ENCODE measurements at regions of chr5 and their contacts with region 1.

Region 1: GRCh38 chr5:141564216-141564692 is 54.5 kb downstream of the DIAPH1 start:
- DNase-seq: peak; percentile 75
- ATAC-seq: peak; percentile 90
- H3K4me3 Mint-ChIP-seq: peak overlapping the region; percentile 12
- H3K27ac Mint-ChIP-seq: peak overlapping the region; percentile 74
- H3K4me1 Mint-ChIP-seq: peaks cover 41% of the 10 kb centered on the region
- H3K27me3 Mint-ChIP-seq: no peaks in the 10 kb centered on the region

Region 2: GRCh38 chr5:141199359-141200235 is 364.7 kb before region 1 on chr5 and contains the start of gene PCDHB11:
- CTCF ChIA-PET with region 1: no interaction called
- POLR2A ChIA-PET with region 1: no interaction called
- intact Hi-C with region 1: loop called in 1 of 2 experiments (anchors 5 kb)
- DNase-seq: peak; percentile 20
- ATAC-seq: no peak
- H3K4me3 Mint-ChIP-seq: no peak within 1 kb of the TSS
- H3K27ac Mint-ChIP-seq: no peak within 1 kb of the TSS
- H3K4me1 Mint-ChIP-seq: no peaks in the 10 kb centered on the region
- H3K27me3 Mint-ChIP-seq: peaks cover 39% of the 10 kb centered on the region
- total RNA-seq, gene PCDHB11: not detected

Region 3: GRCh38 chr5:141326088-141326854 is 238.0 kb before region 1 on chr5:
- CTCF ChIA-PET with region 1: interaction called, 25 read pairs
- POLR2A ChIA-PET with region 1: no interaction called
- intact Hi-C with region 1: loop called (anchors 2 to 5 kb)
- DNase-seq: peak; percentile 84
- ATAC-seq: peak; percentile 94
- H3K4me3 Mint-ChIP-seq: peak overlapping the region; percentile 72
- H3K27ac Mint-ChIP-seq: peak overlapping the region; percentile 72
- H3K4me1 Mint-ChIP-seq: peaks cover 4% of the 10 kb centered on the region
- H3K27me3 Mint-ChIP-seq: peaks cover 29% of the 10 kb centered on the region

Region 4: GRCh38 chr5:141420855-141421496 is 143.3 kb before region 1 on chr5 and contains the start of gene PCDHGA11:
- CTCF ChIA-PET with region 1: interaction called, 15 read pairs
- POLR2A ChIA-PET with region 1: no interaction called
- intact Hi-C with region 1: loop called in 1 of 2 experiments (anchors 1 kb)
- DNase-seq: peak; percentile 75
- ATAC-seq: peak; percentile 57
- H3K4me3 Mint-ChIP-seq: peak within 1 kb of the TSS; percentile 69
- H3K27ac Mint-ChIP-seq: no peak within 1 kb of the TSS
- H3K4me1 Mint-ChIP-seq: peaks cover 2% of the 10 kb centered on the region
- H3K27me3 Mint-ChIP-seq: peaks cover 70% of the 10 kb centered on the region
- total RNA-seq, gene PCDHGA11: 0.07 TPM in 1 of 2 experiments, not detected in the other

Region 5: DNA sequence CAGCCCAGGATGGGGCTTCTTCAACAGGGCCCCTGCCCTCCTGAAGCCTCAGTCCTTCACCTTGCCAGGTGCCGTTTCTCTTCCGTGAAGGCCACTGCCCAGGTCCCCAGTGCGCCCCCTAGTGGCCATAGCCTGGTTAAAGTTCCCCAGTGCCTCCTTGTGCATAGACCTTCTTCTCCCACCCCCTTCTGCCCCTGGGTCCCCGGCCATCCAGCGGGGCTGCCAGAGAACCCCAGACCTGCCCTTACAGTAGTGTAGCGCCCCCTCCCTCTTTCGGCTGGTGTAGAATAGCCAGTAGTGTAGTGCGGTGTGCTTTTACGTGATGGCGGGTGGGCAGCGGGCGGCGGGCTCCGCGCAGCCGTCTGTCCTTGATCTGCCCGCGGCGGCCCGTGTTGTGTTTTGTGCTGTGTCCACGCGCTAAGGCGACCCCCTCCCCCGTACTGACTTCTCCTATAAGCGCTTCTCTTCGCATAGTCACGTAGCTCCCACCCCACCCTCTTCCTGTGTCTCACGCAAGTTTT is 51.8 kb before region 1 on chr5:
- CTCF ChIA-PET with region 1: interaction called, 23 read pairs
- POLR2A ChIA-PET with region 1: no interaction called
- intact Hi-C with region 1: no loop called
- DNase-seq: peak; percentile 93
- ATAC-seq: peak; percentile 17
- H3K4me3 Mint-ChIP-seq: peak overlapping the region; percentile 75
- H3K27ac Mint-ChIP-seq: peak overlapping the region; percentile 86
- H3K4me1 Mint-ChIP-seq: peaks cover 38% of the 10 kb centered on the region
- H3K27me3 Mint-ChIP-seq: no peaks in the 10 kb centered on the region

Region 6: GRCh38 chr5:141613344-141613743 is 49.1 kb after region 1 on chr5:
- CTCF ChIA-PET with region 1: interaction called, 24 read pairs
- POLR2A ChIA-PET with region 1: no interaction called
- intact Hi-C with region 1: loop called in 1 of 2 experiments (anchors 2 kb)
- DNase-seq: no peak
- ATAC-seq: no peak
- H3K4me3 Mint-ChIP-seq: peak overlapping the region; percentile 1
- H3K27ac Mint-ChIP-seq: peak overlapping the region; percentile 37
- H3K4me1 Mint-ChIP-seq: peaks cover 77% of the 10 kb centered on the region
- H3K27me3 Mint-ChIP-seq: no peaks in the 10 kb centered on the region

Region 7: DNA sequence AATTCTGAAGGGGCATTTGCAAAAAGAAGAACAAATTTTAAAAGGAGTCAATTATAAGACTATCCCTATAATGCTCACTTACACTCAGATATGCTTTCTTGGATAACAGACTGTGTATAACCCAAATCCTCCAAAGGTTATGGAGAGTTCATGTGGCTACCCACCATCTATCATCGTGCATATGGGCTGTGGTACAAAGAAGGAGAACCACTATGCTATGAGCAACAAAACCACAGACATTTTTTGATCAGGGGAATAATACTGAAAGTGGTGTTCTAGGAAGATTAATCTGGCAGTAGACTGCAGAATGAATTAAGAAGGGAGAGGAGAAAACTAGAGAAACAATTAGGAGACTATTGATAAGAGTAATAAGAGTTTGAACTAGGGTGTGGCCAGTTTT is 1822.5 kb after region 1 on chr5:
- CTCF ChIA-PET with region 1: no interaction called
- POLR2A ChIA-PET with region 1: no interaction called
- intact Hi-C with region 1: no loop called
- DNase-seq: peak; percentile 27
- ATAC-seq: peak; percentile 89
- H3K4me3 Mint-ChIP-seq: no peak overlapping the region
- H3K27ac Mint-ChIP-seq: no peak overlapping the region
- H3K4me1 Mint-ChIP-seq: peaks cover 76% of the 10 kb centered on the region
- H3K27me3 Mint-ChIP-seq: no peaks in the 10 kb centered on the region

Measured in activated CD4-positive, alpha-beta T cell treated with anti-CD3 and anti-CD28 coated beads for 36 hours (primary cell).